Head of caudate nucleus (tissue), 42 donors: ENCODE measurements at regions of chrX and their contacts with region 1.

Region 1: GRCh38 chrX:10189317-10190268 is 32.8 kb downstream of the CLCN4 start:
- DNase-seq: peak; percentile 46 to 92 (median 83)

Region 2: GRCh38 chrX:9980927-9981326 is 208.7 kb before region 1 on chrX:
- intact Hi-C with region 1: no loop called
- DNase-seq: no peak

Region 3: DNA sequence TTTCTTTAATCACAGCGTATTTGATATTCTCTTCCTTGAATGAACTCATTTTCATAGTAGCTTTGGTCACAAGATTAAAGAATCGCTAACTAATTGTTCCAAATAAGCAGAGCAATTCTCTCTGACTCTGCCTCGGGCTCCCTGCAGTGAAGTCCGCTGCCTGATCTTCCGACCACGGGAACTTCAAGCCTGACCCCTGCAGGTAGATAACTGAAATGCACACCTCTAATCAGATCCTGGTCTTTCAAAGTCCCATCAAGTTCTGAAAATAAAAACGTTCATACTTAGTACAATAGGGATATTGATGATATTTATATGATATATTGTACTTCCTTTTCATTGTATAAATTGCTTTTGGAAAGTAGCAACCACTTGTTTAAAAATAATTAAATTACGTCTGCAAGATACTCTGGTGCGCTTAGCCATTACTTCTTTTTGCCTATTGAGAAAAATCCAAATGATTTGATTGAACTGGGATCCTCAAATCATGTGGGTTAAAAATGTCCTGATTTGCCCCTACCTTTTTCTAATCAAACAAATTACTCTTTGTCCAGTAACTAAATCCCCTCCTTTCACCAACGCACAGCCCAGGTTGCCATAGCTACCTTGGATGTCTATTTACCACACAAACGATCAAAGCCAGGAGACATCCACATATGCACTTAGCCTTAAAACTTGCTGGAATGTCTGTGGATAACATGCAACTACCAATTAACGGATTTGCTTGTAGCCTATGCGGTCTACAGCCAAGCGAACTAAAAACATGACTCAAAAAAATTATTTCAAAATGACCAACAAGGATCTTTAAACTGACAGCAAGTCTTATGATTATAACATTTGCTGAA is 426.6 kb after region 1 on chrX:
- intact Hi-C with region 1: loop called (anchors 10 kb)
- DNase-seq: peak in 41 of 42 donors; percentile 7 to 84 (median 56)

Region 4: GRCh38 chrX:10636337-10636736 is 446.7 kb after region 1 on chrX:
- intact Hi-C with region 1: loop called (anchors 10 kb)
- DNase-seq: peak in 30 of 42 donors; percentile 5 to 76 (median 32)

Region 5: DNA sequence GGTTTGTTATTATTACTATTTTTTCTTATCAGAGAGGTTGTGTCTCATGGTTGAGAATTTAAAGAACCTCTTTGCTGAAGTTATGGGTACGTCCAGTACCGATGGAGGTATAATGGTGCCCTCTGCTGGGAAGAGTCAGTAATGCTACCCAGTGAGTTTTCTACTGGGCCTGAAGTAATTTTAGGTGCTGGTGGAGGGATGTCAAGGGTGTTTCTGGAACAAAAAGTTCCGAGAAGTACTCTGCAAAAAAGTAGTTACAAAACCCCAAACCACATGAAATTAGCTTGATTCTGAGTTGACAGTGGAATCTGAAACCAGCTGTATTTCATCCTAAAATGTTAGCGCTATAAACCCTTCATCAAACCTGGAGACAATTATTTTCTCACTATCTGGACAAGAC is 533.3 kb after region 1 on chrX:
- intact Hi-C with region 1: loop called (anchors 5 kb)
- DNase-seq: peak in 39 of 42 donors; percentile 9 to 89 (median 67)

Region 6: GRCh38 chrX:11137543-11138139 is 948.0 kb after region 1 on chrX:
- intact Hi-C with region 1: loop called (anchors 10 kb)
- DNase-seq: peak in 5 of 42 donors; percentile 2 to 44 (median 16)